Uterus (tissue), 4 donors: ENCODE measurements at regions of chr22 and their contacts with region 1.

Region 1: GRCh38 chr22:43203471-43203981 is 16.6 kb upstream of the TTLL12 start:
- DNase-seq: no peak
- H3K4me3 ChIP-seq: no peak overlapping the region
- H3K27ac ChIP-seq: no peak overlapping the region
- H3K4me1 ChIP-seq: no peaks in the 10 kb centered on the region
- H3K27me3 ChIP-seq: no peaks in the 10 kb centered on the region
- CTCF ChIP-seq: no peak
- POLR2A ChIP-seq: no peak

Region 2: DNA sequence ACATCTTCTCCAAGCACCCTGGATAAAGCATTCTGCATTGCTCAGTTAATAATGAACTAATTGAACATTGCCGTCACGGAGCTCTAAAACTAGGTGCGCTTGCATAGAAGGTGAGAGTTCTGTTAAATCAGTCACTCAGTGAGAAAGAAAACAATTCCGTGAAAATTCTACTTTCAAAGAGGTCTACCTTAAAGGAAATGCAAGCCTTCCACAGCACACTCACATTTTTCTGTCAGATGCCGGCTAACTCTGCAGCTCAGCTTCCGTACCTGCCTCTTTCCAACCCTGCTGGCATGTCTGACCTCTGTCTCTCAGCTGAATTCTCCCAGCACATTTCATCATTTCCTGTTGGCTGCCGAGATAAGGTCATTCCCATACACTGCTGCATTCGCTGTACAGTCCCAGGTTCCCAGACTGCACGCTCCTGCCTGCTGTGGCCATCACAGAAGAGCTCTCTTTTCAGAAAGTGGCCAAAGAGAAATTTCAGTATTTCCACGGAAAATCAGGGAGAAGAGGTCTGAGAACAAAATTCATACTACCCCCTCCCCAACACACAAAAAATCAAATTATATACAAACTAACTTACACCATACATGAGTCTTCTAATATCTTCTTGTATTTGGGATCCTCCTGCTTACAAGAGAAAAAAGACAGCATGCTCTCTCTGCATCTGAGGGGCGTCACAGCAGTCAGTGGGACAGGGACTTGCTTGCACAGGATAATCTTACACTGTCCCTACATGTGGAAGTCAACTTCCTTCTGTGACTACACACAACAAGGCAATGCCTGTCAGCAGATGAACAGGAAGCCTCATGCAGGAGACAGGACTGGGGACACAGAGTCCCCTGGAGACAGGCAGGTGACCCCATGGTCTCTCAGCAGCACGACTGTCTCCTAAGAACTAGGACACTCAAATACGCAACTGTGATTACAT is 243.7 kb before region 1 on chr22:
- intact Hi-C with region 1: no loop called
- DNase-seq: peak in 1 of 2 donors; percentile 62
- H3K4me3 ChIP-seq: peak overlapping the region in 1 of 2 donors; percentile 2
- H3K27ac ChIP-seq: peak overlapping the region; percentile 31 to 59
- H3K4me1 ChIP-seq: peaks cover 0 to 8% of the 10 kb centered on the region in 2 donors
- H3K27me3 ChIP-seq: no peaks in the 10 kb centered on the region
- CTCF ChIP-seq: no peak
- POLR2A ChIP-seq: no peak

Region 3: GRCh38 chr22:43263645-43264514 is 60.4 kb after region 1 on chr22:
- intact Hi-C with region 1: loop called (anchors 10 kb)
- DNase-seq: peak; percentile 42 to 48
- H3K4me3 ChIP-seq: no peak overlapping the region
- H3K27ac ChIP-seq: no peak overlapping the region
- H3K4me1 ChIP-seq: peaks cover 0 to 7% of the 10 kb centered on the region in 2 donors
- H3K27me3 ChIP-seq: no peaks in the 10 kb centered on the region
- CTCF ChIP-seq: no peak
- POLR2A ChIP-seq: no peak

Region 4: GRCh38 chr22:43313244-43313889 is 109.8 kb after region 1 on chr22:
- intact Hi-C with region 1: no loop called
- DNase-seq: peak; percentile 85
- H3K4me3 ChIP-seq: no peak overlapping the region
- H3K27ac ChIP-seq: peak overlapping the region in 1 of 2 donors; percentile 44
- H3K4me1 ChIP-seq: no peaks in the 10 kb centered on the region
- H3K27me3 ChIP-seq: no peaks in the 10 kb centered on the region
- CTCF ChIP-seq: no peak
- POLR2A ChIP-seq: no peak